ENCODE measurements at regions of chr10 and their contacts with region 1.

Region 1: DNA sequence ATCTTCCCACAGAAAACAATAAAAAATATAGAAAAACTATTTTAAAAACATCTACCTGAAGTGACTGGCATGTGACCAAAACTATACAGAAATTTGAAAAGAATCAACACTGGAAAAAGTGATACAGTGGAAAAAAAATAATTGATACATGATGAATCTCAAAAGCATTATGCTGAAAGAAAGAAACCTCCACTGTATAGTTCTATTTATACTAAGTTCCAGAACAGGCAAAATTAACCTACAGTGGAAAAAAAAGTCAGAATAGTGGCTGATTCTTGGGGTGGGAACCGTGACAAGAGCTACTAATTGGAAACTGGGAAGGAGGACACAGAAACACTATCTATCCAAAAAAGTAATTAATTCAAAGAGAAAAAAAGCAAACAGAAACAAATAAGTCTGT is 14.9 kb downstream of the RTKN2 start:
- DNase-seq: no peak
- ATAC-seq: no peak
- H3K4me3 Mint-ChIP-seq: no peak overlapping the region
- H3K27ac Mint-ChIP-seq: peak overlapping the region; percentile 72
- H3K4me1 Mint-ChIP-seq: peaks cover 22% of the 10 kb centered on the region
- H3K27me3 Mint-ChIP-seq: peaks cover 2% of the 10 kb centered on the region
- CTCF ChIP-seq: no peak

Region 2: DNA sequence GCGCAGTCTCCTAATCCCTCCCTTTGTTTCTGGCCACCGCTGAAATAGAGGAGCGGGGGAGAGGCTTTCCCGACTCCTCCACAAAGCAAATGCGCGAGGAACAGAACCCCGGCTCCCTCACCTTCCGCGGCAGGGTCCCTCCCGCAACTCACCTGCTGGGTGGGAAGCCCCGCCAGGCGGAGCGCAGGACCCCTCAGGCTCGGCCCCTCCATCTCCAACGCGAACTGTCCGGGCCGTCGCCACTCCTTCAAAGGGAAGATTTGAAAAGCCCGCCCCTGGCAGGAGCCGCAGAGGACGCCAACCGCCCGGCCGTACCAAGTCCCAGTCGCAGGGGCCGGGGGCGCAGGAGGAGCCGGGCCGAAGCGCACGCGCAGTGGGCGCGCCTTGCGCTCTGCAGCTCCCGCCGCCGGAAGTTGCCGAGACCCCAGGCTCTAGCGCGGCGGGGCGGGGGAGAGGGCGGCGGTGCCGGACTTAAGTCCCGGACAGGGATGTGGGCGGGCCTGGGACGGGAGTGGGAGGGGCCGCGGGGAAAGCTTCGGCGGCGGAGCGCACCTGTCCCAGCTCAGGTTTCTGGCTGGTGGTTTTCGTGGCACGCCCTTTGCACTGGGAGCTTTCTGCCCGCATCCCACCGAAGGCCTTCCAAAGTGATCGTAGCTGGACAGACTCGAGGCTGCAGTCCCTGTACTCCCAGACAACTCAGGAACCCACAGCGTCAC is 14.9 kb after region 1 on chr10 and contains the start of gene RTKN2:
- CTCF ChIA-PET with region 1: interaction called, 20 read pairs
- POLR2A ChIA-PET with region 1: no interaction called
- intact Hi-C with region 1: no loop called
- DNase-seq: peak; percentile 72
- ATAC-seq: peak; percentile 91
- H3K4me3 Mint-ChIP-seq: peak within 1 kb of the TSS; percentile 71
- H3K27ac Mint-ChIP-seq: no peak within 1 kb of the TSS
- H3K4me1 Mint-ChIP-seq: peaks cover 8% of the 10 kb centered on the region
- H3K27me3 Mint-ChIP-seq: peaks cover 30% of the 10 kb centered on the region
- CTCF ChIP-seq: no peak
- total RNA-seq, gene RTKN2: 1.1 to 1.4 TPM

Region 3: DNA sequence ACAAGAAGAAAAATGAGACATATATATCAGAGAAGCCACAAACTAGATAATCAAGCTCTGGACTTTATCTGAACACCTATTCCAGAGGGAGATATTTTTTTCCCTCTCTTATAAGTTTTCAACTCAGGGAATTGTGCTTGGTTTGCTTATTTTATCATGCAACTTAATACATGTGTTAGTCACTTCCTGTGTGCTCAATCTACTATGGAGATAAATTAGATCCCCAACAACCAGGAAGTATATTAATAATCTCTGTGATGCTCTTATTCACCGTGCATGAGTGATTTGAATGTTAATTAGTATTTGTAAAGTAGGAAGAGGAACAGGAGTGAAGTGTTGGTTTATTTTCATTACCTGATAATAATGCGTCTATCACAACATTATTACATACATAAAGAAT is 81.6 kb after region 1 on chr10:
- CTCF ChIA-PET with region 1: no interaction called
- POLR2A ChIA-PET with region 1: no interaction called
- intact Hi-C with region 1: no loop called
- DNase-seq: no peak
- ATAC-seq: no peak
- H3K4me3 Mint-ChIP-seq: no peak overlapping the region
- H3K27ac Mint-ChIP-seq: no peak overlapping the region
- H3K4me1 Mint-ChIP-seq: no peaks in the 10 kb centered on the region
- H3K27me3 Mint-ChIP-seq: peaks cover 9% of the 10 kb centered on the region
- CTCF ChIP-seq: no peak

Measured in activated CD8-positive, alpha-beta T cell treated with anti-CD3 and anti-CD28 coated beads for 36 hours (primary cell).